ENCODE measurements at regions of chr17 and their contacts with region 1.

Region 1: DNA sequence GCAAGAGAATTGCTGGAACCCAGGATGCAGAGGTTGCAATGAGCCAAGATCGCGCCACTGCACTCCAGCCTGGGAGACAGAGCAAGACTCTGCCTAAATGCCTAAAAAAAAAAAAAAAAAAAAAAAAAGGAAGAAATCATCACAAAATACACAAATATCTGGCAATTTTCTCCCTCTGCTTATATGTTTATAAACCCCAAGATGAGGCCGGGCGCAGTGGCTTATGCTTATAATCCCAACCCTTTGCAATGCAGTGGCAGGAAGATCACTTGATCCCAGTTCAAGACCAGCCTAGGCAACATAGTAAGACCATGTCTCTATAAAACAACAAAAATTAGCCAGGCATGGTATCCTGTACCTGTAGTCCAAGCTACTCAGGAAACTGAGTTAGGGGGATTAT is 21.5 kb downstream of the MED1 start:
- DNase-seq: no peak
- ATAC-seq: no peak
- H3K4me3 ChIP-seq: no peak overlapping the region
- H3K27ac ChIP-seq: no peak overlapping the region
- H3K4me1 ChIP-seq: peaks cover 0 to 5% (median 0%) of the 10 kb centered on the region in 12 donors
- H3K27me3 ChIP-seq: no peaks in the 10 kb centered on the region
- CTCF ChIP-seq: no peak
- POLR2A ChIP-seq: no peak

Region 2: GRCh38 chr17:39508987-39509386 is 79.4 kb after region 1 on chr17:
- intact Hi-C with region 1: loop called in 2 of 10 experiments (anchors 5 to 10 kb)
- DNase-seq: no peak
- ATAC-seq: no peak
- H3K4me3 ChIP-seq: no peak overlapping the region
- H3K27ac ChIP-seq: no peak overlapping the region
- H3K4me1 ChIP-seq: no peaks in the 10 kb centered on the region
- H3K27me3 ChIP-seq: no peaks in the 10 kb centered on the region
- CTCF ChIP-seq: no peak
- POLR2A ChIP-seq: no peak

Region 3: GRCh38 chr17:39527220-39527813 is 97.7 kb after region 1 on chr17:
- intact Hi-C with region 1: loop called in 1 of 10 experiments (anchors 10 kb)
- DNase-seq: no peak
- ATAC-seq: peak in 2 of 4 donors; percentile 36 to 49
- H3K4me3 ChIP-seq: no peak overlapping the region
- H3K27ac ChIP-seq: no peak overlapping the region
- H3K4me1 ChIP-seq: peaks cover 0 to 14% (median under 1%) of the 10 kb centered on the region in 12 donors
- H3K27me3 ChIP-seq: no peaks in the 10 kb centered on the region
- CTCF ChIP-seq: peak; percentile 19 to 58 (median 40)
- POLR2A ChIP-seq: no peak